Activated CD4-positive, alpha-beta memory T cell treated with anti-CD3 and anti-CD28 coated beads for 36 hours (primary cell): ENCODE measurements at regions of chr2 and their contacts with region 1.

Region 1: DNA sequence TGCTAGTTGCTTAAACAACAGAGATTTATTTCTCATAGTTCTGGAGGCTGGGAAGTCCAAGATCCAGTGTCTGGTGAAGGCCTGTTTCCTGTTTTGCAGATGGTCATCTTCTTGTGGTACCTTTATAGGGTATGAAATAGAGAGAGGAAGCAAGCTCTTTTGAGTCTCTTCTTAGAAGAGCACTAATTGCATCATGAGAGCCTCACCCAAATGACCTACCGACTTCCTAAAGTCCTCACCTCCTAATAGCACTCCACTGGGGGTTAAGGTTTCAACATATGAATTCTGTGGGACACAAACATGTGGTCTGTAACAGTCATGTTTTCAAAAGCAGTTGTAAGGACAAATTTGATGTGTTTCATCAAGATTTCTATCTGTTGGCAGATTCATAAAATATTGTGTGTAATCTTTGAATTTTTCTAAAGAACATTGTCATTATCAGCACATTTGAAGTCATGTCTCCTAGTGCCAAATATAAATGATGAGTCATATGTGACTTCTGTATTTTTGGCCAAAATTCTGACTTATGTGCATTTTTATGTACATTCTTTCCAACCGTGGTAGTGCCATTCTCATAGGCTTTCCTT is 45.3 kb downstream of the CD28 start:
- DNase-seq: no peak
- H3K4me3 Mint-ChIP-seq: no peak overlapping the region
- H3K27ac Mint-ChIP-seq: peak overlapping the region; percentile 81
- H3K4me1 Mint-ChIP-seq: peaks cover 56% of the 10 kb centered on the region
- H3K27me3 Mint-ChIP-seq: no peaks in the 10 kb centered on the region

Region 2: DNA sequence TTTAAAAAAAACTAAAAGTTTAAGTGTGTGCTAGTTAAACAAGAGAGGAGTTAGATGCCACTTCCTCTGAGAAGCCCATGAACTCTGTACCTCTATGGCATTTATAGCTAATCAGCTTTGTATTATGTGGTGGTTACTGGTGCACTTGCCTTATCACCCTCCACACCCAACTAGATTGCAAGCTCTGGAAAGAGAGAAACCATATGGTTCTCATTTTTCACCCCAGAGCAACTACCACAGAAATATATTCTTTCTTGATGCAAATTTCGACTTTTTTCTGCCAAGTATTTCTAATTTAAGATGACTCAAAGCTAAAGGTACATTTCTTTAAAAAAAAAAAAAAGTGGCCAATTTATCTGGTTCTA is 240.9 kb before region 1 on chr2:
- CTCF ChIA-PET with region 1: no interaction called
- POLR2A ChIA-PET with region 1: no interaction called
- intact Hi-C with region 1: no loop called
- DNase-seq: no peak
- H3K4me3 Mint-ChIP-seq: no peak overlapping the region
- H3K27ac Mint-ChIP-seq: no peak overlapping the region
- H3K4me1 Mint-ChIP-seq: peaks cover 4% of the 10 kb centered on the region
- H3K27me3 Mint-ChIP-seq: no peaks in the 10 kb centered on the region

Region 3: GRCh38 chr2:203718087-203718486 is 33.7 kb before region 1 on chr2:
- CTCF ChIA-PET with region 1: interaction called, 6 read pairs
- POLR2A ChIA-PET with region 1: interaction called, 10 read pairs
- intact Hi-C with region 1: no loop called
- DNase-seq: peak; percentile 85
- H3K4me3 Mint-ChIP-seq: peak overlapping the region; percentile 69
- H3K27ac Mint-ChIP-seq: peak overlapping the region; percentile 94
- H3K4me1 Mint-ChIP-seq: peaks cover 96% of the 10 kb centered on the region
- H3K27me3 Mint-ChIP-seq: no peaks in the 10 kb centered on the region